CD8-positive, alpha-beta T cell (primary cell): ENCODE measurements at regions of chr5 and their contacts with region 1.

Region 1: GRCh38 chr5:55146543-55147151 is 13.3 kb upstream of the GPX8 start:
- DNase-seq: peak; percentile 65 to 90 (median 83)
- ATAC-seq: peak; percentile 92
- H3K4me3 ChIP-seq: no peak overlapping the region
- H3K4me3 Mint-ChIP-seq: peak overlapping the region; percentile 30
- H3K27ac ChIP-seq: no peak overlapping the region
- H3K27ac Mint-ChIP-seq: no peak overlapping the region
- H3K4me1 ChIP-seq: peaks cover 15% of the 10 kb centered on the region
- H3K4me1 Mint-ChIP-seq: peaks cover 13% of the 10 kb centered on the region
- H3K27me3 ChIP-seq: no peaks in the 10 kb centered on the region
- H3K27me3 Mint-ChIP-seq: no peaks in the 10 kb centered on the region
- CTCF ChIP-seq: peak; percentile 98

Region 2: DNA sequence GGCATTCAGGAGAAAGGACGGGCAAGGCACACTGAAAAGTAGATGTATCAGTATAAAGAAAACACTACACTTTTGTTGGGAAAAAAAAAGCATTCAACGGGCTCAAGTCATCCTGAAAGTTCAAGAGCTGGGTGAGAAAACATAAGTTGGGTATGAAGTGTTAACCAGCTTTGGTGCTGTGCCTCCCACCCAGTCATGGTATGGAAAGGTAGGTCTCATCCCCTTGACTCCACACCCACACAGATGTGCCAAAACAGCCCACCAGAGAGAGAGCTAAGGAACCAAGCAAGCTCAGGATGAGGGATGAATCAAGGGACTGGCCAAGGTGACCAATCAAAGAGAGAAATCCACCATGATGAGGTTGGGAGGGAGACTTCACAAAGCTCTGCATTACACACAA is 215.9 kb before region 1 on chr5:
- CTCF ChIA-PET with region 1: interaction called, 20 read pairs
- POLR2A ChIA-PET with region 1: no interaction called
- intact Hi-C with region 1: no loop called
- DNase-seq: no peak
- ATAC-seq: no peak
- H3K4me3 ChIP-seq: no peak overlapping the region
- H3K4me3 Mint-ChIP-seq: no peak overlapping the region
- H3K27ac ChIP-seq: no peak overlapping the region
- H3K27ac Mint-ChIP-seq: no peak overlapping the region
- H3K4me1 ChIP-seq: no peaks in the 10 kb centered on the region
- H3K4me1 Mint-ChIP-seq: no peaks in the 10 kb centered on the region
- H3K27me3 ChIP-seq: no peaks in the 10 kb centered on the region
- H3K27me3 Mint-ChIP-seq: peaks cover 13% of the 10 kb centered on the region
- CTCF ChIP-seq: no peak

Region 3: GRCh38 chr5:54969856-54970828 is 176.5 kb before region 1 on chr5:
- CTCF ChIA-PET with region 1: interaction called, 10 read pairs
- POLR2A ChIA-PET with region 1: interaction called, 3 read pairs
- intact Hi-C with region 1: no loop called
- DNase-seq: no peak
- ATAC-seq: no peak
- H3K4me3 ChIP-seq: no peak overlapping the region
- H3K4me3 Mint-ChIP-seq: no peak overlapping the region
- H3K27ac ChIP-seq: no peak overlapping the region
- H3K27ac Mint-ChIP-seq: no peak overlapping the region
- H3K4me1 ChIP-seq: no peaks in the 10 kb centered on the region
- H3K4me1 Mint-ChIP-seq: no peaks in the 10 kb centered on the region
- H3K27me3 ChIP-seq: no peaks in the 10 kb centered on the region
- H3K27me3 Mint-ChIP-seq: no peaks in the 10 kb centered on the region
- CTCF ChIP-seq: no peak

Region 4: DNA sequence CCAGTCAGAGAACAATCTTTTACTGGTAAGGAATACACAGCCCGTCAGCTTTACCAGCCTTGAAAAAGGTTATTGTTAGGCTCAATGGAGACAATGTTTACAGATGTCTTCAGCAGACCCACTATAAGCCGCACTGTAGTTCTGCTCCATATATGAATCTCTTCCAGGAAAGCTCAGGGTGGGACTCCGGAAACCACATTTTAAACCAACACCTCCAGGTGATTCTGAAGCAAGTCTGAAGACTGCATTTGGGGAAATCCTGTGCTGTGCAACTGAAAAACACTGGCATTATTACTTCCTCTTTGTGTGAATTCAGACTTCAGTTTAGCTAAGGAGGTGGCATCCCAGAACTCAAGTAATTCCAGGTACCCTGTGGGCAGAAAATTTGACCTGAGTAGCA is 119.1 kb before region 1 on chr5:
- CTCF ChIA-PET with region 1: interaction called, 14 read pairs
- POLR2A ChIA-PET with region 1: no interaction called
- intact Hi-C with region 1: no loop called
- DNase-seq: peak in 2 of 9 experiments; percentile 55 to 70
- ATAC-seq: peak; percentile 33
- H3K4me3 ChIP-seq: peak overlapping the region; percentile 2 to 42
- H3K4me3 Mint-ChIP-seq: peak overlapping the region; percentile 82
- H3K27ac ChIP-seq: peak overlapping the region in 1 of 2 experiments; percentile 31
- H3K27ac Mint-ChIP-seq: peak overlapping the region; percentile 78
- H3K4me1 ChIP-seq: peaks cover 38% of the 10 kb centered on the region
- H3K4me1 Mint-ChIP-seq: peaks cover 75% of the 10 kb centered on the region
- H3K27me3 ChIP-seq: no peaks in the 10 kb centered on the region
- H3K27me3 Mint-ChIP-seq: no peaks in the 10 kb centered on the region
- CTCF ChIP-seq: no peak

Region 5: DNA sequence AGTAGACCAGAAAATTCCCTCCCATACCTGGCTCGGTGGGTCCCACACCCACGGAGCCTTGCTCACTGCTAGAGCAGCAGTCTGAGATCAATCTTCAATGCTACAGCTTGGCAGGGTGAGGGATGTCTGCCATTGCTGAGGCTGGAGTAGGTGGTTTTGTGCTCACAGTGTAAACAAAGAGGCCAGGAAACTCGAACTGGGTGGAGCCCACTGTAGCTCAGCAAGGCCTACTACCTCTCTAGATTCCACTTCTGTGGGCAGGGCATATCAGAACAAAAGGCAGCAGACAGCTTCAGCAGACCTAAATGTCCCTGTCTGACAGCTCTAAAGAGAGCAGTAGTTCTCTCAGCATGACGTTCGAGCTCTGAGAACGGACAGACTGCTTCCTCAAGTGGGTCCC is 49.8 kb before region 1 on chr5:
- CTCF ChIA-PET with region 1: interaction called, 15 read pairs
- POLR2A ChIA-PET with region 1: no interaction called
- intact Hi-C with region 1: loop called in 1 of 2 experiments (anchors 1 kb)
- DNase-seq: peak; percentile 13 to 81 (median 60)
- ATAC-seq: peak; percentile 85
- H3K4me3 ChIP-seq: peak overlapping the region in 1 of 2 experiments; percentile 17
- H3K4me3 Mint-ChIP-seq: peak overlapping the region; percentile 57
- H3K27ac ChIP-seq: peak overlapping the region; percentile 48 to 79
- H3K27ac Mint-ChIP-seq: peak overlapping the region; percentile 92
- H3K4me1 ChIP-seq: peaks cover 61% of the 10 kb centered on the region
- H3K4me1 Mint-ChIP-seq: peaks cover 86% of the 10 kb centered on the region
- H3K27me3 ChIP-seq: no peaks in the 10 kb centered on the region
- H3K27me3 Mint-ChIP-seq: no peaks in the 10 kb centered on the region
- CTCF ChIP-seq: no peak

Region 6: GRCh38 chr5:55108661-55109060 is 38.0 kb before region 1 on chr5:
- CTCF ChIA-PET with region 1: interaction called, 15 read pairs
- POLR2A ChIA-PET with region 1: interaction called, 3 read pairs
- intact Hi-C with region 1: no loop called
- DNase-seq: no peak
- ATAC-seq: no peak
- H3K4me3 ChIP-seq: no peak overlapping the region
- H3K4me3 Mint-ChIP-seq: no peak overlapping the region
- H3K27ac ChIP-seq: no peak overlapping the region
- H3K27ac Mint-ChIP-seq: peak overlapping the region; percentile 45
- H3K4me1 ChIP-seq: peaks cover 26% of the 10 kb centered on the region
- H3K4me1 Mint-ChIP-seq: peaks cover 50% of the 10 kb centered on the region
- H3K27me3 ChIP-seq: no peaks in the 10 kb centered on the region
- H3K27me3 Mint-ChIP-seq: no peaks in the 10 kb centered on the region
- CTCF ChIP-seq: no peak